ENCODE measurements at regions of chr12 and their contacts with region 1.

Region 1: DNA sequence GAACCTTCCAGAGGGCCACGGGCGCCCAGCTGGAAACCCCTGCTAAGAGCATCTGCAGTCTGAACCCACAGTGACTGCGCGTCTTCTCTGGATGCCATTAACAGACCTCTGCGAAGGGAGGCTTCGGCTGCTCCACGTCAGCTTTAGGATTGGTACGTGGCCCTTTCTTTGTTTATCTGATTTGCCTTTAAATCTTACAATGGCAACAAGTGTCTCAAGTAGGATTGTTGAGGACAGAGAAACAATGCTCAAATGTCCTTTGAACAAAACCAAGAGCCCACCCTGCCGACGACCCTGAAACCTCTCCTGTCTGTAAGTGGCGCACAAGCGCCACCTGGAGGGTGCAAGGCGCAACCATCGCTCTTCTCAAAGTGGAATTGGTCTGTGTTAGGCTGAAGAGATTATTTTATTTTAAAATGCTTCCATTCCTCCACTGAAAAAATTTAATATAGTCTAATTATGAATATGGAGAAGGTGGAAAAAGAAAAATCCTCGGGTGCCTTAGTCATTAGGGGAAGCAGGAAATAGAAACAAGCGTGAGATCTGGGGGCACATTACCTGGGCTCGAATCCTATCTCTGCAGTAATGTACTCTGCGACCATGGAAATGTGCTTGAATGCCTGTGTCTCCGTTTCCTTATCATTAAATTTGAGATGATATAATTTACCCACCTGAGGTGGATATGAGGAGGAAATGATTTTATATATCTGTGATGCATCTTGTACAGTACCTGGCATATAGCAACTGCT is 82.6 kb upstream of the PTPRB start:
- DNase-seq: peak; percentile 74
- H3K4me3 Mint-ChIP-seq: peak overlapping the region; percentile 58
- H3K27ac Mint-ChIP-seq: no peak overlapping the region
- H3K4me1 Mint-ChIP-seq: peaks cover 6% of the 10 kb centered on the region
- H3K27me3 Mint-ChIP-seq: peaks cover 7% of the 10 kb centered on the region

Region 2: DNA sequence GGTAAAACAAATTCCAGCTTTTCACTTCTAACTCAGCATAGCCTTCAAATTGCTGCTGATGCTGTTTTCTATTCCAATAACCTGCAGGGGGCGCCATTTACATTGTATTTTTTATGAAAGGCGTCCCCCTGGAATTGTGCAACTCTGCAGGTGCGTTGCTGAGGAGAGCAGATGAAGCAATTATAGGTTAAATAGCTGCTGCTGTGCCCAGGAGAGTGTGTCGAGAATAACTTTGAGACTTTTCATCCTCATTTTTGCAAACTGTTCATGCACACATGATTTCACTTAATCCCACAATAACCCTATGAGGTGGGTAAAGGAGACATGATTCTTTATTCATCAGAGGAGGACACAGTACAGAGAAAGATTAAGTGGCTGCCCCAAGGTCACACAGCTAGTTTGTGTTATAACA is 819.1 kb before region 1 on chr12:
- intact Hi-C with region 1: loop called (anchors 5 kb)
- DNase-seq: peak; percentile 87
- H3K4me3 Mint-ChIP-seq: no peak overlapping the region
- H3K27ac Mint-ChIP-seq: no peak overlapping the region
- H3K4me1 Mint-ChIP-seq: no peaks in the 10 kb centered on the region
- H3K27me3 Mint-ChIP-seq: peaks cover 2% of the 10 kb centered on the region

Region 3: DNA sequence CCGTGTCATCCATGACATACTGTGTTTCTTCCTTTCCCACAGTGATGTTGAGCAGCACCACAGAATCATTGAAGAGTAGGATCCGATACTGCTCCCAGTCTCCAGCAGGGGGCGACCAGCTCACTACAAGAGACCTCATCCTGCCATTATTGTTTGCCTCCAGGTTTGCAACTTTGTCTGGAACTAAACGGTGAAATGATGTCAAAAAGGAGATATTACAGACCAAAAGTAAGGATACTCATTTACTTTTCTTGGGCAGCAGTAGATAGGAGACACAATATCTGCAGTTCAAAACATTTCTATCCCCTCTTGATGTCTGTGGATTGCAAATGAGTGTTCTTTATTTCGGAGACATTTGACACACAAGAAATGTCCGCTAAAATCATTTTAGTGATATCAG is 129.8 kb before region 1 on chr12:
- intact Hi-C with region 1: loop called (anchors 1 kb)
- DNase-seq: peak; percentile 84
- H3K4me3 Mint-ChIP-seq: no peak overlapping the region
- H3K27ac Mint-ChIP-seq: no peak overlapping the region
- H3K4me1 Mint-ChIP-seq: no peaks in the 10 kb centered on the region
- H3K27me3 Mint-ChIP-seq: peaks cover 8% of the 10 kb centered on the region

Measured in activated CD4-positive, alpha-beta T cell treated with anti-CD3 and anti-CD28 coated beads, Interleukin-2, amount 10 ng/mL, durations not matched to agents 24 days and 14 days (primary cell).